AG04450 (cell line): ENCODE measurements at regions of chr7 and their contacts with region 1.

Region 1: GRCh38 chr7:123797673-123798527 is 47.1 kb upstream of the HYAL4 start:
- DNase-seq: peak; percentile 39
- H3K4me3 ChIP-seq: no peak overlapping the region
- H3K27ac ChIP-seq: no peak overlapping the region
- H3K27me3 ChIP-seq: peaks cover 6% of the 10 kb centered on the region
- CTCF ChIP-seq: peak; percentile 52

Region 2: GRCh38 chr7:123787220-123788007 is 10.5 kb before region 1 on chr7:
- CTCF ChIA-PET with region 1: interaction called, 11 read pairs
- POLR2A ChIA-PET with region 1: no interaction called
- DNase-seq: no peak
- H3K4me3 ChIP-seq: no peak overlapping the region
- H3K27ac ChIP-seq: no peak overlapping the region
- H3K27me3 ChIP-seq: no peaks in the 10 kb centered on the region
- CTCF ChIP-seq: no peak

Region 3: GRCh38 chr7:123811056-123811455 is 13.2 kb after region 1 on chr7:
- CTCF ChIA-PET with region 1: interaction called, 18 read pairs
- POLR2A ChIA-PET with region 1: no interaction called
- DNase-seq: no peak
- H3K4me3 ChIP-seq: no peak overlapping the region
- H3K27ac ChIP-seq: no peak overlapping the region
- H3K27me3 ChIP-seq: no peaks in the 10 kb centered on the region
- CTCF ChIP-seq: no peak

Region 4: GRCh38 chr7:123871998-123872867 is 74.3 kb after region 1 on chr7:
- CTCF ChIA-PET with region 1: interaction called, 16 read pairs
- POLR2A ChIA-PET with region 1: no interaction called
- DNase-seq: peak; percentile 1
- H3K4me3 ChIP-seq: no peak overlapping the region
- H3K27ac ChIP-seq: no peak overlapping the region
- H3K27me3 ChIP-seq: no peaks in the 10 kb centered on the region
- CTCF ChIP-seq: peak; percentile 46